Panc1 (cell line): ENCODE measurements at regions of chr10 and their contacts with region 1.

Region 1: DNA sequence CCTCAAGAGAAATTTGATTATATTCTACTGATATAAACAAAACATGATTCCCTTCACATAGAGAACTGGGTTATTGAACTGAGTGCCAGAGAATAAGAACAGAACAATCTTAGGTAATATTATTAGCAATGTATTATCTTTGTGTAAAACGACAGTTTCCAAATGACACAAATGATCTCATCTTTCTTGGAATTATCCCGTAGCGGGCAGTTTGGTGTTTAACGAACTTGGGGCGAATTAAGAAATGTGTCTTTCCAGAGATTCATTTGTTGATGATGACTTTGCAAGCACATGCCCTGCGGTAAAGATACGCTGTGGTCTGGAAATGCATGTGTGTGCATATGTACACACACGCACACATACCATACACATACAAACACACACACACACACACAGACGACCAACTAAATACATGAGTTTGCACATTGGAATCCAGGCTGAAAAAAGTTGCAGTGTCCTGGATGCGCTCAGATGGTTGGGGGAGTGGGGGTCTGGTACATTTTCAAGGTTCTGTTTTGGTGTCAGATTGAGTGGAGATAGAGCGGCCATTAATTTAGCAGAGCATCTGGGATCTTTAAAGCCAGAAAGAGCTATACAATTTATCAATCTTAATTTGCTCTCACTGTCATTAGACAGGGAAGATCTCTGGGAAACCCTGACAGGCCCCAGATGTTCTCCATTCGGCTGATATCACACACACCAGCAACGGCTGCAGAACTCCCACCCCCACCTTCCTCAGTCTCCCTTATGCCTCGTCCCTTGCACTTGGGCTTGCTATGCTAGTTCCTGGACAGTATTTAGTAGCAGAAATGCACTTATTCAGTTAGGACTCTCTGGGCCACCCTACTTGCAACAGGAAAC is 112.4 kb upstream of the FAM171A1 start:
- DNase-seq: no peak
- ATAC-seq: no peak
- H3K4me3 ChIP-seq: no peak overlapping the region
- H3K27ac ChIP-seq: no peak overlapping the region
- H3K4me1 ChIP-seq: no peaks in the 10 kb centered on the region
- H3K27me3 ChIP-seq: no peaks in the 10 kb centered on the region
- CTCF ChIP-seq: no peak

Region 2: GRCh38 chr10:15088428-15089261 is 394.8 kb before region 1 on chr10 and contains the start of gene ACBD7:
- CTCF ChIA-PET with region 1: no interaction called
- POLR2A ChIA-PET with region 1: no interaction called
- in situ Hi-C with region 1: no loop called
- intact Hi-C with region 1: no loop called
- DNase-seq: no peak
- ATAC-seq: peak; percentile 99
- H3K4me3 ChIP-seq: peak within 1 kb of the TSS; percentile 55 to 59
- H3K27ac ChIP-seq: no peak within 1 kb of the TSS
- H3K4me1 ChIP-seq: peaks cover 4% of the 10 kb centered on the region; the same call in 1 of the 2 replicates
- H3K27me3 ChIP-seq: no peaks in the 10 kb centered on the region
- CTCF ChIP-seq: no peak
- total RNA-seq, gene ACBD7: 1.8 TPM

Region 3: DNA sequence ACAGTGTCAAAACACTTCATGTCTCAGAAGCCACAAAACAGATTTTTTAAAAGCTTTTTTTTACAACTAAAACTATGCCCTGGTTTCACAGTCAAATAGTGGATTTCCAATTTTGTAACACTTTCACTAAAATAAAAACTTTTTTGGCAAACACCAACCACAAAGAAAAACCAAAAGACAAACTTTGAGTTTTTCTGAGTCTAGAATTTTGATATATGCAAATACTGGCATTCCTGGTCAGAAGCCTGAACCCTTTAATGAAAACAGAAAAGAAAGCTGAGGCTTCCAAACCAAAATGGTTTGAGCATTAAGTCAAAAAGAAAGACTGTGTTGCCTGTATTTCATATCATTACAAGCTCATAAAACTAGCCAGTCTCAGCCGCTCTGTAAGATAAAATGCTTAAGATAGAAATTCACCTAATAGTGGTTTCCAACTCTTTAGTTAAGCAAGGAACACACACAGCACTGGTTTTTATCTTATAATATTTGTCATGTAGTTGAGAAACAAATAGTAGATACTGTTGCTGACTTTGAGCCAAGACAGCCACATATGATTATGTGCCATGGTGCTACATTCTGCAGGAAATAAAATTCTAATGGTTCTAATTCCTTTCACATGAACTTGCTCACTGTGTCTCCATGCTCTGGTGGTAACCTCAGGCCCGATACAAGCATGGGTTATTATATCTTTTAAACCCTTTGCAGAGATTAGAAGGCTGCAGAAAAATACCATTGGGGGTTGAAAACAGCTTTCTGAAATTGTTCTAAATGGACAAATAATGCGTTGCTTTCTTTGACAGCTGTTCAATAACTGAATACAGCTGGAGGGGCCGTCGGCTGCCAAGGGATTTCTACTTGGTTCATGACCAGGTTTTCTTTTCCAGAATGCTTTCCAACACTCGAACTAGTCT is 161.8 kb before region 1 on chr10:
- CTCF ChIA-PET with region 1: no interaction called
- POLR2A ChIA-PET with region 1: interaction called, 14 read pairs
- in situ Hi-C with region 1: no loop called
- intact Hi-C with region 1: no loop called
- DNase-seq: no peak
- ATAC-seq: no peak
- H3K4me3 ChIP-seq: no peak overlapping the region
- H3K27ac ChIP-seq: no peak overlapping the region
- H3K4me1 ChIP-seq: no peaks in the 10 kb centered on the region
- H3K27me3 ChIP-seq: no peaks in the 10 kb centered on the region
- CTCF ChIP-seq: no peak